ENCODE measurements at regions of chr4 and their contacts with region 1.

Region 1: DNA sequence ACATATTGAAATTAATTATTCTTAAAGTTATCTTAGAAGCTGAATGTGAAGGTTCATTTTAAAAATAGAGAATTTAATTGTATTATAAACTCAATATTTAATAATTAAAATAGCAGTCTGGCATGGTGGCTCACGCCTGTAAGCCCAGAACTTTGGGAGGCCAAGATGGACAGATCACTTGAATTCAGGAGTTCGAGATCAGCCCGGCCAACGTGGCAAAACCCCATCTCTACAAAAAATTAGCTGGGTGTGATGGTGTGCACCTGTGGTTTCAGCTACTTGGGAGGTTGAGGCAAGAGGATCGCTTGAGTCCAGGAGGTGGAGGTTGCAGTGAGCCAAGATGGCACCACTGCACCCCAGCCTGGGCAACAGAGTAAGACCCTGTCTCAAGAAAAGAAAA is 659.9 kb upstream of the AGA start:
- DNase-seq: no peak
- ATAC-seq: no peak
- H3K4me3 ChIP-seq: no peak overlapping the region
- H3K27ac ChIP-seq: no peak overlapping the region
- H3K4me1 ChIP-seq: no peaks in the 10 kb centered on the region
- H3K27me3 ChIP-seq: no peaks in the 10 kb centered on the region
- CTCF ChIP-seq: no peak
- POLR2A ChIP-seq: no peak
- RAD21 ChIP-seq: no peak

Region 2: DNA sequence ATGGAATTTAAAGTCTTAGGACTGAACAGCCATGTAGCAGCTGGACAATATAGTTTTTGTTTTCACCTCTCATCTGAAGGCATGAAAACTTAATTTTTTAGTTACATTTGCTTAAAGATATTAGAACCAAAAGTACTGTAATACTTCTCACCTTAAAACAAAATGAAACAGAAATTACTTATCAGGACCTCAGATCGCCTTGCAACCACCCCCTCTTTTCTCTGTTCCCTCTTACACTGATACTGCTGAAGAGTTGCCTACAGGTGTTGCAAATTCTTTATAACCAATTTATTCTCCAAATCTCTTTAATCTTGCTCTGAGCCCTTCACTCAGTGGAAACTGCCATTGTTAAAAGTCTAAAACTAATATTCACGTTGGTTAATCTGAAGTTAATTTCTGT is 1637.4 kb before region 1 on chr4:
- CTCF ChIA-PET with region 1: no interaction called
- POLR2A ChIA-PET with region 1: no interaction called
- dilution Hi-C with region 1: no loop called
- in situ Hi-C with region 1: no loop called
- intact Hi-C with region 1: no loop called
- DNase-seq: no peak
- ATAC-seq: no peak
- H3K4me3 ChIP-seq: no peak overlapping the region
- H3K27ac ChIP-seq: no peak overlapping the region
- H3K4me1 ChIP-seq: no peaks in the 10 kb centered on the region
- H3K27me3 ChIP-seq: no peaks in the 10 kb centered on the region
- CTCF ChIP-seq: no peak
- POLR2A ChIP-seq: no peak
- RAD21 ChIP-seq: no peak

Region 3: DNA sequence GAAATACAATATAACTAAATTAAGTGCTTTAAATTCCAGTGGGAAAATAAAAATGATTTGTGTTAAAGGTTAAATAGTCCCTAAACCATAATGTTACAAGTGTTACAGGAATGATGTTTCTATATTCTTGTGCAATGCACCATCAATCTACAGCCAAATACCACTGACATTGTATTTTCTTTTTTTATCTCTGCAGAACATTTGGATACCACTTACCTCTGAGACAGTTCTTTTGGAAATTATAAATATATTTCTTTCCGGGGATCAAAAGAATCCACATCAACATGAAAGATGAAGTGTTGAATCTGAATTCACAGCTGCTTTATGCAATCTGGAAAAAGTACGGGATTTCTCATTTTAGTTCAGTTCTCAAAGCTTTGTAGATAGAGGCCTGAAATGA is 141.6 kb before region 1 on chr4:
- CTCF ChIA-PET with region 1: no interaction called
- POLR2A ChIA-PET with region 1: no interaction called
- dilution Hi-C with region 1: no loop called
- in situ Hi-C with region 1: no loop called
- intact Hi-C with region 1: no loop called
- DNase-seq: peak; percentile 0
- ATAC-seq: no peak
- H3K4me3 ChIP-seq: no peak overlapping the region
- H3K27ac ChIP-seq: no peak overlapping the region
- H3K4me1 ChIP-seq: peaks cover 2% of the 10 kb centered on the region; the same call in 1 of the 2 replicates
- H3K27me3 ChIP-seq: no peaks in the 10 kb centered on the region
- CTCF ChIP-seq: no peak
- POLR2A ChIP-seq: no peak
- RAD21 ChIP-seq: no peak

Region 4: GRCh38 chr4:178068136-178068535 is 34.0 kb before region 1 on chr4:
- CTCF ChIA-PET with region 1: no interaction called
- POLR2A ChIA-PET with region 1: no interaction called
- dilution Hi-C with region 1: no loop called
- in situ Hi-C with region 1: no loop called
- intact Hi-C with region 1: loop called (anchors 2 kb)
- DNase-seq: no peak
- ATAC-seq: no peak
- H3K4me3 ChIP-seq: no peak overlapping the region
- H3K27ac ChIP-seq: no peak overlapping the region
- H3K4me1 ChIP-seq: no peaks in the 10 kb centered on the region
- H3K27me3 ChIP-seq: no peaks in the 10 kb centered on the region
- CTCF ChIP-seq: no peak
- POLR2A ChIP-seq: no peak
- RAD21 ChIP-seq: no peak

Region 5: DNA sequence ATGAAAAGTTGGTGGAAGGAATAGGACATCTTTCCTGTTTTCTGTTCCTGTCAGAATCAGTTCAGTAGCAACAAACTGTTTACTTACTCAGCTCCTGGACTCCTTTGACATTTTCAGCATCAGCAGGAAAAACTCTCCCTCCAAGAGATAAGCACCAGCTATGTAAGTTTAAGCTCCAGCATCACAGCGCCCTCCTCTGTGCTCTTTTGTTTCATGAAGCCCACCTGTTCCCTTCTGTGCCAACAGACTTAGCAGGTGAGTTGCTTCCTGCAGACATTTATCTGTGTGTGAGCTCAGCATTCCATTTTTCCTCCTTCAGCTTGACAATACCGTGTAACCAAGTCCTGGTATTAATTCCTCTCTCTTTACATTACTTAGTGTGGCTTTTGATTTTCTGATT is 15.8 kb before region 1 on chr4:
- CTCF ChIA-PET with region 1: no interaction called
- POLR2A ChIA-PET with region 1: no interaction called
- dilution Hi-C with region 1: no loop called
- in situ Hi-C with region 1: no loop called
- intact Hi-C with region 1: no loop called
- DNase-seq: peak; percentile 1
- ATAC-seq: no peak
- H3K4me3 ChIP-seq: no peak overlapping the region
- H3K27ac ChIP-seq: no peak overlapping the region
- H3K4me1 ChIP-seq: no peaks in the 10 kb centered on the region
- H3K27me3 ChIP-seq: no peaks in the 10 kb centered on the region
- CTCF ChIP-seq: no peak
- POLR2A ChIP-seq: no peak
- RAD21 ChIP-seq: no peak

Region 6: DNA sequence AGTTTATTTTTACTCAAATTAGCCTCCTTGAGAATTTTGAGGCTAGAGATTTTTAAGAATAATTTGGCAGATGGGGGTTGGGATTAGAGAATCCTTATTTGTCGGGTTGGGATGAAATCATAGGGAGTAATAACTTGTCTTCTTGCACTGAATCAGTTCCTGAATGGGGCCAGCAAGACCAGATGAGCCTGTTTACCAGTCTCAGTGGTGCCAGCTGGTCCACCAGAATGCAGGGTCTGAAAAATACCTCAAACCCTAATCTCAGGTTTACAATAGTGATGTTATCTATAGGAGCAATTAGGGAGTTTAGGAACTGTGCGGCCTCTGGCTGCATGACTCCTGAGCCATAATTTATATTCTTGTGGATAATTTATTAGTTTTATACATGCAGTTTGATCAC is 46.0 kb after region 1 on chr4:
- CTCF ChIA-PET with region 1: no interaction called
- POLR2A ChIA-PET with region 1: no interaction called
- dilution Hi-C with region 1: no loop called
- in situ Hi-C with region 1: no loop called
- intact Hi-C with region 1: no loop called
- DNase-seq: no peak
- ATAC-seq: no peak
- H3K4me3 ChIP-seq: no peak overlapping the region
- H3K27ac ChIP-seq: no peak overlapping the region
- H3K4me1 ChIP-seq: no peaks in the 10 kb centered on the region
- H3K27me3 ChIP-seq: no peaks in the 10 kb centered on the region
- CTCF ChIP-seq: no peak
- POLR2A ChIP-seq: no peak
- RAD21 ChIP-seq: no peak